ENCODE measurements at regions of chr16 and their contacts with region 1.

Region 1: DNA sequence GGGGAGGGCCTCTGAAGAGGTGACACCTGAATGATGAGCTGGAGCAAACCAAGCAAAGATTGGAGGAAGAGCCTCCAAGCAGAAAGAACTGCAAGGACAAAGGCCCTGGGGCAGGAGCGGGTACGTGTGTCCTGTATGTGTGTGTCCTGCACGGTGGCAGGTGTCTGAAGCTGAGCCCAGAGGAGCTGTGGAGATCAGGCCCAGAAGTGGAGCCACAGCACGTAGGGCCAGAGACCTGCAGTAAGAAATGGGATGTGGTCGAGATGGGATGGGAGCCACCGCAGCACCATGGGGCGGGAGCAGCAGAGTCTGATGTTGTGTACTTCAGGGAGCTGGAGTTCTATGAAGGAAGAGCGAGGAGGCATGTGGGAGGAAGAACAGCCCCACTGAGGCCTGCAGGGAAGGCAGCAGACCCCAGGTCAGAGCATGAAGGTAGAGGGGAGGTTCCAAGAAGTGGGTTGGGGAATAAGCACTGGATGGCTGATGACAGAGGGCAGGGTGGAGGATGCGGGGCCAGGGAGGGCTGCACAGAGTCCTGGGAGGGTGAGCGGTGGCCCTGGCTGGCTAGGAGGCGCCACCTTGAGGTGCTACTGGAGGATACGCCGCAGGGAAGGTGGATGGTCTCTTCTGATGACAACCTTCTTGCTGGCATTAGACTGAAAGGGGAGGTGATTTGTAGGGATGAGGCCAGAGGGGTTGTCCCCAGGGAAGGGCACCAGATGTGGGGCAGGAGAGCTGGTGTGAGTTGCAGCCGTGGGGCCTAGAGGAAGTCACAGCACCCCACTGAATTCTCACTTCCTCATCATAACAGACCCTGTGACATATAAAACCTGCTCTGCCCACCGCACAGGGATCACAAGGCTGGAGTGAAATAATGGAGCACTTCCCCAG is 10.6 kb upstream of the CETP start:
- DNase-seq: peak in 1 of 2 experiments; percentile 74
- H3K4me3 ChIP-seq: no peak overlapping the region
- H3K27ac ChIP-seq: no peak overlapping the region
- H3K4me1 ChIP-seq: no peaks in the 10 kb centered on the region
- H3K27me3 ChIP-seq: no peaks in the 10 kb centered on the region
- CTCF ChIP-seq: peak; percentile 78 to 90 (median 88)
- EP300 ChIP-seq: no peak
- POLR2A ChIP-seq: no peak
- RAD21 ChIP-seq: peak; percentile 83

Region 2: GRCh38 chr16:56874800-56875199 is 76.3 kb before region 1 on chr16:
- CTCF ChIA-PET with region 1: interaction called, 37 read pairs
- POLR2A ChIA-PET with region 1: no interaction called
- DNase-seq: no peak
- H3K4me3 ChIP-seq: no peak overlapping the region
- H3K27ac ChIP-seq: no peak overlapping the region
- H3K4me1 ChIP-seq: no peaks in the 10 kb centered on the region
- H3K27me3 ChIP-seq: no peaks in the 10 kb centered on the region
- CTCF ChIP-seq: no peak
- EP300 ChIP-seq: no peak
- POLR2A ChIP-seq: no peak
- RAD21 ChIP-seq: no peak

Region 3: DNA sequence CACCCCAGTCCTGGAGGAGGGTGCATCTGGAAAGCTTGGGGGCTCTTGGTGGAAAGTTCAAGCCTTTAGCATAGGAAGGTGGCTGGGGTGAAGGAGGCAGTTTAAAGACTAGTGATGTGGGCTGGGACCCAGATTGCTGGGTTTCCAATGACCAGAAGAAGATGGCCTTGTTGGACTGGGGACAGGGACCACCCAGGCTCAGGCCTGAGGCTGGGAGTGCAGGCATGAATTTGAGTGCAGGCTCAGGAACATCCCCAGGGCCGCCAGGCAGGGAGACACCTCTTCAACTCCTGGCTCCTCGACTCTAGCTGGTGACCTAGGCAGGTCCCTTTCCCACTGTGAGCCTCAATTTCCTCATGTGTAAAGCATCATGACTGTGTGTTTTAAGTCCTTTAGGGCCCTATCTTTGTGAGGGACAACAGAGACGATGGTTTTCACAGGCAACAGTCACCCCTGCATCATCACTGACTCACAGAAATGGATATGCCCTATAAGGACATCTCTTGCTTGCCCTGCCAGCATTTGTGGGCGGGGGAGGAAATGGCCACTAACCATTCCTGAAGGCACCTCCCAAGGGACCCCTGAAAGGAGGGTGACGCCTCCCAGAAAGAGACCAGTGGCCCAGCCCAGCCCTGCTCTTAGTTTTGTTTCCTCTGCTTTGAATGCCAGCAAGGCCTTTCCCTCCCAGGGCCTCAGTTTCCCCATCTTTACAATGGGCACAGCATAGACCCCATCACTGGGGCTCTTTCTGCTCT is 49.3 kb after region 1 on chr16:
- CTCF ChIA-PET with region 1: no interaction called
- POLR2A ChIA-PET with region 1: no interaction called
- DNase-seq: no peak
- H3K4me3 ChIP-seq: no peak overlapping the region
- H3K27ac ChIP-seq: no peak overlapping the region
- H3K4me1 ChIP-seq: peaks cover 0 to 11% (median 6%) of the 10 kb centered on the region in 4 experiments; a peak in 4 of 7 replicates
- H3K27me3 ChIP-seq: no peaks in the 10 kb centered on the region; a peak in 1 of 7 replicates
- CTCF ChIP-seq: no peak
- EP300 ChIP-seq: no peak
- POLR2A ChIP-seq: no peak
- RAD21 ChIP-seq: no peak

Region 4: DNA sequence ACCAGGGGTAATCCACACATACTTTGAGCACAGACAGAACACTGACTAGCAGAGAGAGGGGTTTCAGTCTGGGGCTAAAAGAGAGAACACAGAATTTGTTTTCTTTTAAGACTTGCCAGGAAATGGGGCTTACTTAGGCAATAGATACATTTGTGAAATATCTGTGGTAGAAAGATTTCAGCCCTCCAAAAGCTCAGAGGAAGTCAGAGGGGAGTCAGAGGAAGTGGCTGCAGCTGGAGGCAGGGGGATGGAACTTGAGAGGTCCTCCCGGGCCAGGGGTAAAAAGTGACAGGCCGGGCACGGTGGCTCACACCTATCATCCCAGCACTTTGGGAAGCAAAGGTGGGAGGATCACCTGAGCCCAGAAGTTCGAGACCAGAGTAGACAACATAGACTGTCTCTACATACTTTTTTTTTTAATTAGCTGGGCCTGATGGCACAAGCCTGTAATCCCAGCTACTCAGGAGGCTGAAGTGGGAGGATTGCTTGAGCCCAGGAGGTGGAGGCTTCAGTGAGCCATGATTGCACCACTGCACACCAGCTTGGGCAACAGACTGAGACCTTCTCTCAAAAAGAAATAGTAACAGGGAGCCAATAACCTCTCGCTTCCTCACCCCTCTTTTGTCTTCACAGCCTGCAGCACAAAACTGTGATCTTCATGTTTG is 88.2 kb after region 1 on chr16:
- CTCF ChIA-PET with region 1: no interaction called
- POLR2A ChIA-PET with region 1: no interaction called
- DNase-seq: no peak
- H3K4me3 ChIP-seq: no peak overlapping the region
- H3K27ac ChIP-seq: no peak overlapping the region
- H3K4me1 ChIP-seq: no peaks in the 10 kb centered on the region
- H3K27me3 ChIP-seq: no peaks in the 10 kb centered on the region
- CTCF ChIP-seq: no peak
- EP300 ChIP-seq: no peak
- POLR2A ChIP-seq: no peak
- RAD21 ChIP-seq: no peak